ENCODE measurements at regions of chr11 and their contacts with region 1.

Region 1: DNA sequence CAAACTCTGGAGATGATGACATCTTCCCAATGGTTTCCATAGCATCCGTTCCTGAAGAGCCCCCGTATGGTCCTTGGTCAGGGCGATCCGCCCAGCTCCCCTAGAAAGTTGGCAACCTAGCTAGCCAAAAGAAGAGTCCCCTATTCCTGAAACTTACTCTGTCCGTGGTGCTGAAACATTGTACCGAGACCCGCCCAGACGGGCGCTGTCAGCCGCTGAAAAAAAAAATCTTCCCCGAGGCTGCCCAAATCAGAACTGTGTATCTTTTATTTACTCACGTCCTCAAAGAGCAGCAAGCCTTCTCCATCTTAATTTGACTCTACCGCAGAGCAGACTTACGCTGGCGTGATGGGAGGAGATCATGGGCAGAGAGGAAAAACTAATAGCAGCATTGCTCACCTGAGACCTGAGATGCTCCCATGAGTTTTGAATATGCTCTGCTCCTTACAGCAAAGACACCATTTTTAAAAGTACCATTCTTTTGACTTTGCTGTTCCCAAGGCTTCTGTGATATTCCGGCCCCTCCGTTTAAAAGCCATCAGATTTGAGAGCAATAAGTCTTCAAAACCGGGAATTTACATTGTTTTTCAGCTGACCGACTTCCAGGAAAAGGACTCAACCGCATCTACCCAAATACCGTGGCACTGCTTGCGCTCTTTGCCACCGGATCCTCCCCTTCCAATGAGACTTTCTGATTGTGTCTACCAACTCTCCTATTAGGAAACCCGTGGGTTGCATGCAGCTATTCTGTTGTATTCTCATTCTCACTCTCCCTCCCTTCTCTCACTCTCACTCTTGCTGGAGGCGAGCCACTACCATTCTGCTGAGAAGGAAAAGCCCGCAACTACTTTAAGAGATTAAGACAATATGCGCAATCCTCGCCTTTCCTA is at the start of gene SLC17A6:
- DNase-seq: no peak
- ATAC-seq: no peak
- total RNA-seq, gene SLC17A6: not detected

Region 2: GRCh38 chr11:22221143-22221542 is 116.7 kb before region 1 on chr11:
- intact Hi-C with region 1: no loop called
- DNase-seq: no peak
- ATAC-seq: peak; percentile 47

Region 3: GRCh38 chr11:22389526-22390282 is 51.9 kb after region 1 on chr11:
- intact Hi-C with region 1: no loop called
- DNase-seq: no peak
- ATAC-seq: no peak

Region 4: GRCh38 chr11:22787551-22788162 is 449.8 kb after region 1 on chr11:
- intact Hi-C with region 1: loop called (anchors 2 kb)
- DNase-seq: no peak
- ATAC-seq: peak; percentile 41

Measured in left ventricle myocardium superior (tissue), 1 donor.